Heart left ventricle (tissue), 16 donors: ENCODE measurements at regions of chr19 and their contacts with region 1.

Region 1: DNA sequence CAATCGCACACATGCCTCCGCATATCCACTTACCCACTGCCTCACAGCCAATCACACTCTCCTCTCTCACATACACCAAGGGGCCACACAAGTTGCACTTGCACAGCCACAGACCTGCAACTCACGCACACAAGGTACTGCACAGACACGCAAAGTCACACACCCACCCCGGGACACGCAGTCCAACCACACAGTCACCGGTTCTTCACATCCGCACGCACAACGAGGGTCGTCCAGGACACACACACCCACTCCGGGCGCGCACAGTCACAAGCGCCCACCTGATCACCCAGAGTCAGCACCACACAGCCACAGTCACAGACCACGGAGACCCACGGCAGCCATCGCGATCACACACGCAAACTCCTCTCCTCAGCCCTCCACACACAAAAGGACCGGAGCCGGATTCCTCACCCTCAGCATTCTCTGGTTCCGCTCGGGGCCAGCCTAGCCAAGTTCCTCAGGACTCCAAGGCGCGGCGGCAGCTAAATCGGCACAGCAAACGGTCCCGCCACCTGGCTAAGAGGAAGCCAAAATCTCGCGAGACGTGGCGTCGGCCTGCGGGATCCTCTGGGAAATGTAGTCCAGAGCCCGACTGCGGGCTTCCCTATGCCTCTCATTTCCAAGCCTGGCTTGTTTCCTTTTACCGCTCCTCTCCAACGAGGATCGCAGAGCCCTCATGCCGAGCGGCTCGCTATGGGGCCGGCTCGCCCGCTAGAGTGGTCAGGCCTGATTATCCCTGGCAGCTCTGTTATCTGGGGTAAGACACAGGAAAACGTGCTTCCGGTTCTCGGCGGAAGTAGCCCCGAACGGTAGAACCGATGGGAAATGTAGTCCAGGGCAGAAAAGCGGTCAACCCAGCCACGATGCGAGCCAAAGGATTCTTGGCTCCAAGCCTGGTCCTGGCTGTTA is at the start of gene ZNF850:
- DNase-seq: peak; percentile 95 to 97 (median 96)
- ATAC-seq: peak; percentile 95 to 98 (median 97)
- H3K4me3 ChIP-seq: peak within 1 kb of the TSS; percentile 44 to 93 (median 76)
- H3K27ac ChIP-seq: peak within 1 kb of the TSS; percentile 34 to 92 (median 85)
- H3K4me1 ChIP-seq: peaks cover 0 to 23% (median 10%) of the 10 kb centered on the region in 12 donors
- H3K27me3 ChIP-seq: no peaks in the 10 kb centered on the region
- CTCF ChIP-seq: no peak
- POLR2A ChIP-seq: peak in 1 of 2 donors; percentile 34
- total RNA-seq, gene ZNF850: 2.3 to 7.3 (median 4.0) TPM

Region 2: DNA sequence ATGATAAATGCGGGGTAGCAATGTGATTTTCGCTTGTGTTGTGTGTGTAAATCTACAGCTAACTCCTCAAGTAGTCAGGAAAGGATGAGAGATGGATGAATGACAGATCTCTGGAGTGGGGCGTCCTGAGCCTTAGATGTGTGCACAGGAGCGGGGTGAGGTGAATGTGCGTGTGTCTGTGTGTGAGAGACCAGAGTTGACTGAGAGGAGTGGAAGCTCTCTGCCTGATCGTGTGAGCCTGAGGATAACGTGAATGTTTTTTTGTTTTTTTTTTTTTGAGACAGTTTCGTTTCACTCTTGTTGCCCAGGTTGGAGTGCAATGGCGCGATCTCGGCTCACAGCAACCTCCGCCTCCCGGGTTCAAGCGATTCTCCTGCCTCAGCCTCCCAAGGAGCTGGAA is 106.7 kb before region 1 on chr19:
- intact Hi-C with region 1: loop called in 1 of 10 experiments (anchors 5 kb)
- DNase-seq: no peak
- ATAC-seq: no peak
- H3K4me3 ChIP-seq: peak overlapping the region; percentile 47 to 96 (median 78)
- H3K27ac ChIP-seq: peak overlapping the region in 1 of 12 donors; percentile 83
- H3K4me1 ChIP-seq: peaks cover 3 to 21% (median 16%) of the 10 kb centered on the region in 12 donors
- H3K27me3 ChIP-seq: no peaks in the 10 kb centered on the region
- CTCF ChIP-seq: no peak
- POLR2A ChIP-seq: no peak

Region 3: DNA sequence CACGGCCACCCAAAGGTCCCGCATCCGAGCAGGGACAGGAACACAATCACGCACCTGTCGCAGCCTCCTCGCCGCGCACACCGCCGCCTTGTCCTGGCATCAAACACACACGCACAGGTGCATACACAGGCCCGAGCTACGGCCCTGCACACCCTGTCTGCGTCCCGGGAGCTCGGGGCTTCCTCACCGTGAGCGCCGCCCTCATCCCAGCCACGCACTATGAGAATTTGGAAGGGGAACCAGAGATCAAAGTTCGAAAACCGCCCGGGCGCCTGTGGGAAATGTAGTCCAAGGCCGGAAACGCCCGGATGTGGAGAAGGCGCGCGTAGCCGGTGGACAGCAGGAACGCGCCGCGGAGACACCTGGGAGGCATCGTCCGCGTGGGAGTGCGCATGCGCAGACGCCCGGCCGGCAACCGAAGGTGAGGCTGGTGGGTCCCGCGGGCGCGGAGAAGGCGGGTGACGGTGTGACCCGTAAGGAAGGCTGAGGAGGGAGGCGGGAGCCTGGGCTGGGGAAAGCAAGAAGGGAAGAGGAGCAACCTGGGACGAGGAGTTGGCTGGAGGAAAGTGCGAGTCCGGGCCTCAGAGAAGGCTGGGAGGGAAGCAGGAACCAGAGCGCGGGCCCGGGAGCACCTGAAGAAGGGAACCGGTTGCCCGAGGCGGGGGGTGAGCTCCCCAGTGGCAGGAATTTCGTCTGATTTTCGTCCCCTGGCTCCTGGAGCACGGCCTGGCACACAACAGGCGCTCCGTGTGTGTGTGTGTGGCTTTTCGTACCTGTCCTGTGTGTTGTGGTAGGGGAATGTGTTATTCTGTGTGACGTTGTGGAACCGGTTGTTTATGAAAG is 85.1 kb before region 1 on chr19 and contains the start of gene ZNF567:
- intact Hi-C with region 1: loop called in 1 of 10 experiments (anchors 5 kb)
- DNase-seq: peak; percentile 98 to 99 (median 98)
- ATAC-seq: peak; percentile 99 to 100 (median 99)
- H3K4me3 ChIP-seq: peak within 1 kb of the TSS; percentile 59 to 91 (median 80)
- H3K27ac ChIP-seq: peak within 1 kb of the TSS in 11 of 12 donors; percentile 53 to 82 (median 73)
- H3K4me1 ChIP-seq: peaks cover 0 to 20% (median 14%) of the 10 kb centered on the region in 12 donors
- H3K27me3 ChIP-seq: no peaks in the 10 kb centered on the region
- CTCF ChIP-seq: no peak
- POLR2A ChIP-seq: peak in 1 of 2 donors; percentile 89
- total RNA-seq, gene ZNF567: 2.9 to 5.8 (median 3.9) TPM

Region 4: DNA sequence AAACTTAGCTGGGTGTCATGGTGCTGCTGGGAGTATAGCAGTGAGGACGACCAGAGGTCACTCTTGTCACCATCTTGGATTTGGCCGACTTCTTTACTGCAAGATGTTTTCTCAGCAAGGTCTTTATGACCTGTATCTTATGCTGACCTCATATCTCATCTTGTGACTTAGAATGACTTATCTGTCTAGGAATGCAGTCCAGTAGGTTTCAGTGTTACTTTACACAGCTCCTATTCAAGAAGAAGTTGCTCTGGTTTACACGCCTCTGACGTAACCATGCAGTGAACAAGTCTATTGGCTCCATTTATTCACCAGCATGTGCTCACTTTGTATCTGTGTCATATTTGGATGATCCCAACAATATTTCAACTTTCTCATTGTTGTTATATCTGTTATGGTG is 26.7 kb before region 1 on chr19:
- intact Hi-C with region 1: no loop called
- DNase-seq: no peak
- ATAC-seq: no peak
- H3K4me3 ChIP-seq: no peak overlapping the region
- H3K27ac ChIP-seq: no peak overlapping the region
- H3K4me1 ChIP-seq: no peaks in the 10 kb centered on the region
- H3K27me3 ChIP-seq: no peaks in the 10 kb centered on the region
- CTCF ChIP-seq: no peak
- POLR2A ChIP-seq: no peak

Region 5: DNA sequence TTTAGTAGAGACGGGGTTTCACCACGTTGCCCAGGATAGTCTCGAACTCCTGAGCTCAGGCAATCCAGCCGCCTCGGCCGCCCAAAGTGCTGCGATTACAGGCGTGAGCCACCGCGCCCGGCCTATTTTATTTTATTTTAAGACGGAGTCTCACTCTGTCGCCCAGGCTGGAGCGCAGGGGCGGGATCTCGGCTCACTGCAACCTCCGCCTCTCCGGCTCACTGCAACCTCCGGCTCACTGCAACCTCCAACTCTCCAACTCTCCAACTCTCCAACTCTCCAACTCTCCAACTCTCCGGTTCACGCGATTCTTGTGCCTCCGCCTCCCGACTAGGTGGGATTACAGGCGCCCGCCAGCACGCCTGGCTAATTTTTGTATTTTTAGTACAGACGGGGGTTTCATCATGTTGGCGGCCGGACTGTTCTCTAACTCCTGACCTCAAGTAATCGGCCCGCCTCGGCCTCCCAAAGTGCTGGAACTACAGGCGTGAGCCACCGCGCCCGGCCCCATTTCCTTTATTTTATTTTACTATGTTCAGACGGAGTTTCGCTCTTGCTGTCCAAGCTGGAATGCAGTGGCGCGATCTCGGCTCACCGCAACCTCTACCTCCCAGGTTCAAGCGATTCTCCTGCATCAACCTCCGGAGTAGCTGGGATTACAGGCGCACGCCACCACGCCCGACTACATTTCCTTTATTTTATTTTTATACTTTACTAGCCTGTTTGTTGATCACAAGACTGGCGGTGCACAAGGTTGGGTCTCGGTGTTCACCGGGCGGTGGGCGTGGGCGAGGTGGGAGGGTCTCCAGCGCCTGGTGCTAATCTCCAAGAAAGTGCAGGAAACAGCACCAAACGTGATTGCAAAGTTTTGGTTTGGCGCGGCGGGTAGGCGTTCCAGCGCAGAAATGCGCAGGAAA is 23.8 kb after region 1 on chr19:
- intact Hi-C with region 1: loop called in 2 of 10 experiments (anchors 2 kb)
- DNase-seq: no peak
- ATAC-seq: no peak
- H3K4me3 ChIP-seq: peak overlapping the region; percentile 48 to 96 (median 77)
- H3K27ac ChIP-seq: peak overlapping the region; percentile 20 to 87 (median 77)
- H3K4me1 ChIP-seq: peaks cover 0 to 16% (median 8%) of the 10 kb centered on the region in 12 donors
- H3K27me3 ChIP-seq: no peaks in the 10 kb centered on the region
- CTCF ChIP-seq: no peak
- POLR2A ChIP-seq: no peak

Region 6: GRCh38 chr19:36837906-36838783 is 65.6 kb after region 1 on chr19 and contains the start of gene ZNF790:
- intact Hi-C with region 1: loop called in 1 of 10 experiments (anchors 5 kb)
- DNase-seq: peak; percentile 91 to 92 (median 91)
- ATAC-seq: peak; percentile 98 to 99 (median 99)
- H3K4me3 ChIP-seq: peak within 1 kb of the TSS; percentile 27 to 92 (median 73)
- H3K27ac ChIP-seq: peak within 1 kb of the TSS; percentile 69 to 98 (median 92)
- H3K4me1 ChIP-seq: peaks cover 0 to 32% (median 15%) of the 10 kb centered on the region in 12 donors
- H3K27me3 ChIP-seq: no peaks in the 10 kb centered on the region
- CTCF ChIP-seq: no peak
- POLR2A ChIP-seq: peak in 1 of 2 donors; percentile 21
- total RNA-seq, gene ZNF790: 3.4 to 13.0 (median 8.5) TPM

Region 7: DNA sequence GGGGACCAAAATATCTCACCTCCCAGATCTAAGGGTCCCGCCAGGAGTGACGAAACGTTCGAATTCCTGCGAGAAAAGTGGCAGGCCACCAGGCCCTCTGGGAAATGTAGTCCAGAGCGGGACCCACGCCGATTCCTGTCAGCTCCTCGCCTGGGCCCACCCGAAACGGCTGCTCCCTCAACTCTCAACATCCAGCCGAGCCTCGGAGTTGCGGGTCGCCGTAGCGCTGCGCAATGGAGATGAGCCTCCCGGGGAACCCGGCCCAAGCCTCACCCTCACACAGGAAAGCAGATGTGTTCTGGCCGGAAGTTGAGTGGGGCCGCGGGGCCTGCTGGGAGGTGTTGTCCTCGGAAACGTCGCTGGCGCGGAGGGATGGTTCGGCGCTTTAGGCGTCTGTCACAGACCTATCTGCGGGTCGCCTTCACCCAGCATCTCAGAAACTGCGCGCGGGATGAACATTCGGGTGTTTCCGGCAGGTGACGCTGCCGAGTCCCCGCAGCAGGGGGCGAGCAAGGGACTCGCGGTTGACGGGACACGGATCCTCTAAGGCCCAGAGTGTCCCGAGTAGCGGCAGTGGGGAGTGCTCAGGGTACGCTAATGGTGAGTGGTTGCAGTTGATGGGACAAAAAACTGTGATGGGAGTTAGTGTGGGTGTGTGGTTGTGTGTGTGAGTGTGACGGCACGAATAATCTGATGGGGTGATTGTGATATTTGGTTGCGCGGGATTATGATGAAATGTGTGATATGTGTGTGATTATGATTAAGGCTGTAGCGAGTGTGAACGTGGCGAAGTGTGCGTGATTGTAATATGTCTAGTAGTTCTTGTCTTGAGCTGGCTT is 143.6 kb after region 1 on chr19 and contains the starts of genes ZNF568 and ZNF829:
- intact Hi-C with region 1: loop called in 2 of 10 experiments (anchors 5 kb)
- DNase-seq: peak; percentile 91 to 95 (median 93)
- ATAC-seq: peak; percentile 94 to 99 (median 98)
- H3K4me3 ChIP-seq: peak within 1 kb of the TSS; percentile 60 to 87 (median 80)
- H3K27ac ChIP-seq: peak within 1 kb of the TSS; percentile 80 to 98 (median 97)
- H3K4me1 ChIP-seq: peaks cover 0 to 18% (median 11%) of the 10 kb centered on the region in 12 donors
- H3K27me3 ChIP-seq: no peaks in the 10 kb centered on the region
- CTCF ChIP-seq: peak; percentile 44 to 85 (median 61)
- POLR2A ChIP-seq: no peak
- total RNA-seq, gene ZNF568: 6.6 to 12.1 (median 9.4) TPM
- total RNA-seq, gene ZNF829: 1.3 to 3.5 (median 2.5) TPM